Spleen (tissue), 13 donors: ENCODE measurements at regions of chr5 and their contacts with region 1.

Region 1: DNA sequence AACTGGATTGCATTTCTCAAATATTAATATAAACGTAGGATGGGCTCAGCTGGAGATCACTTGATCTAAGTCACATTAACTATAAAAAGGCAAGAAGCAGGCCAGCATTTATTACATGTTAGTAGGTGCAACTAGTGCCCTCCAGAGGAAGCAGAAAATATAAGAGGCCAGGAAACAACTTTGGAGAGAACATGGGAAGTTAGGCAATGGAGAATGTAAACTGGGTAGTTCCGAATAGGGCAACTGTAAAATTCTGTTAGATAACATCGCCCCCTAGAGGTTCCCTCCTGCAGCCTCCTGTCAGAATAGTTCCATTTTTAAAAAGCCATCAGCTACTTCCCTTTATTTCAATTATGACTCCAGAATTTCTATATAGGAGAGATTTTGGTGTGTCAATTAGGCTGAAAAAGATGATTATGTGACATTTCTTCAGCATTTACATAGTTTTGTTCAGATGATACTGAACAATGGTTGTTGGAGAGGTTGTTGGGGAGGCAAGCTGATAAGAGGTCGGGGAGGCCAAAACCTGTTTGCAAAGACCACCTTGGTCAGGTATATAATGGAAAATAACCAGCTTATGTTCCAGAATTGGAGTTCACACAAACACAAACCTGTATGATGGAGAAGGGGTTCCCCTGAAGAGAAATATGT is 22.4 kb downstream of the CCL28 start:
- DNase-seq: no peak
- H3K4me3 ChIP-seq: no peak overlapping the region
- H3K27ac ChIP-seq: peak overlapping the region in 1 of 8 donors; percentile 3
- H3K4me1 ChIP-seq: peaks cover 0 to 12% (median 7%) of the 10 kb centered on the region in 6 donors
- H3K27me3 ChIP-seq: no peaks in the 10 kb centered on the region
- CTCF ChIP-seq: peak; percentile 39 to 88 (median 80)
- POLR2A ChIP-seq: no peak

Region 2: DNA sequence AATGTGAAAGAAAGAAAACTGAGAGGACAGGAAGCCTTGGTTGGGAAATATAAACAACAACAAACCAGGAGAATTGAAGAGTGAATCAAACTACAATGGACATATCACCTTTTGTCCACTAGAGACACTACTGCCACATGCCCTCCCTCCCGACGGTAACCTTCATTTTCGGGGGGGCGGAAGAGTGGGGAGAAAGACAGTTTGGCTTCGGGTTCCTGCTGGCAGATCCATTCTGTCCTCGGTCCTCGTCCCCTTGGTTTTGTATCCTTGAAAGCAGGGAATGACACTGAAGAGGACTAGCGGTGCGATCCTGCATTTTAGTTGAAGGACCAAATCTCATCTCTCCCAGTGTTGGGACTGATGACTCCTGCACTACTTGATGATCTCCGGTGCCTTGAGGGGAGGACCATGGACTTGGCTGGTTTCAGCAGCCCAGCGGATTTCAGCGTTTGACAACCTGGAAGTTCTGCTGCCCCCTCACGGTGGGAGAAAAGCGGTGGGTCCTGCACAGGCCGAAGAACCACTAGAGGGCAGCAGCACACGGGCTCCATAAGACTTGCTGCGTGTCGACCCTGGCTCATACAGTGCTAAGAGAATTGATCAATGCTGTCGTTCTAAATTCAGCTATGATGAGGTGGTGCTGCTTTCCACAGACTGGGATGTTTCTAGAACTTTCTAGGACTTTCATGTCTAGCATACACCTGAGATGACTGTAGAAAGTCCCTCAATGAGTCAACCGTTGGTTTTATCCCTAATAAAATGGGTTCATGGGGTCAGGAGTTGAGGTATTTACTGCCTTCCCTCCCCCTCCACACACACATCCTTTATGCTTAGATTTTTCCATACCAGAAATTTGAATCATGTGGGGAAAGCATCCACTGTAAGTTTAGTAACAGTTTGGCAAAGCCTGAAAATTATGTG is 284.2 kb before region 1 on chr5:
- intact Hi-C with region 1: loop called (anchors 10 kb)
- DNase-seq: peak; percentile 96
- H3K4me3 ChIP-seq: peak overlapping the region; percentile 16 to 75 (median 38)
- H3K27ac ChIP-seq: peak overlapping the region; percentile 57 to 88 (median 75)
- H3K4me1 ChIP-seq: peaks cover 0 to 23% (median 10%) of the 10 kb centered on the region in 6 donors
- H3K27me3 ChIP-seq: no peaks in the 10 kb centered on the region
- CTCF ChIP-seq: peak; percentile 98 to 100 (median 99)
- POLR2A ChIP-seq: no peak

Region 3: GRCh38 chr5:43227655-43228054 is 162.1 kb before region 1 on chr5:
- intact Hi-C with region 1: loop called (anchors 10 kb)
- DNase-seq: no peak
- H3K4me3 ChIP-seq: no peak overlapping the region
- H3K27ac ChIP-seq: no peak overlapping the region
- H3K4me1 ChIP-seq: no peaks in the 10 kb centered on the region
- H3K27me3 ChIP-seq: no peaks in the 10 kb centered on the region
- CTCF ChIP-seq: peak in 7 of 11 experiments; percentile 23 to 40 (median 29)
- POLR2A ChIP-seq: no peak